Naive thymus-derived CD4-positive, alpha-beta T cell (primary cell): ENCODE measurements at regions of chr1 and their contacts with region 1.

Region 1: GRCh38 chr1:24391882-24392603 is 21.5 kb downstream of the STPG1 start:
- DNase-seq: peak in 8 of 9 donors; percentile 29 to 60 (median 47)
- ATAC-seq: peak; percentile 81
- H3K4me3 ChIP-seq: peak overlapping the region; percentile 35
- H3K4me3 Mint-ChIP-seq: peak overlapping the region in 9 of 10 donors; percentile 18 to 77 (median 66)
- H3K27ac ChIP-seq: peak overlapping the region; percentile 60
- H3K27ac Mint-ChIP-seq: peak overlapping the region; percentile 76 to 97 (median 94)
- H3K4me1 ChIP-seq: peaks cover 12 to 29% of the 10 kb centered on the region in 2 donors
- H3K4me1 Mint-ChIP-seq: peaks cover 26 to 45% (median 40%) of the 10 kb centered on the region in 7 donors
- H3K27me3 ChIP-seq: no peaks in the 10 kb centered on the region
- H3K27me3 Mint-ChIP-seq: no peaks in the 10 kb centered on the region

Region 2: GRCh38 chr1:24070821-24071393 is 321.1 kb before region 1 on chr1:
- CTCF ChIA-PET with region 1: no interaction called
- POLR2A ChIA-PET with region 1: no interaction called
- intact Hi-C with region 1: loop called (anchors 2 to 10 kb)
- DNase-seq: peak; percentile 36 to 73 (median 66)
- ATAC-seq: peak; percentile 92
- H3K4me3 ChIP-seq: no peak overlapping the region
- H3K4me3 Mint-ChIP-seq: peak overlapping the region in 1 of 10 donors; percentile 6
- H3K27ac ChIP-seq: no peak overlapping the region
- H3K27ac Mint-ChIP-seq: no peak overlapping the region
- H3K4me1 ChIP-seq: no peaks in the 10 kb centered on the region
- H3K4me1 Mint-ChIP-seq: peaks cover 0 to 5% (median 4%) of the 10 kb centered on the region in 7 donors
- H3K27me3 ChIP-seq: no peaks in the 10 kb centered on the region
- H3K27me3 Mint-ChIP-seq: peaks cover 0 to 10% (median 4%) of the 10 kb centered on the region in 5 donors

Region 3: DNA sequence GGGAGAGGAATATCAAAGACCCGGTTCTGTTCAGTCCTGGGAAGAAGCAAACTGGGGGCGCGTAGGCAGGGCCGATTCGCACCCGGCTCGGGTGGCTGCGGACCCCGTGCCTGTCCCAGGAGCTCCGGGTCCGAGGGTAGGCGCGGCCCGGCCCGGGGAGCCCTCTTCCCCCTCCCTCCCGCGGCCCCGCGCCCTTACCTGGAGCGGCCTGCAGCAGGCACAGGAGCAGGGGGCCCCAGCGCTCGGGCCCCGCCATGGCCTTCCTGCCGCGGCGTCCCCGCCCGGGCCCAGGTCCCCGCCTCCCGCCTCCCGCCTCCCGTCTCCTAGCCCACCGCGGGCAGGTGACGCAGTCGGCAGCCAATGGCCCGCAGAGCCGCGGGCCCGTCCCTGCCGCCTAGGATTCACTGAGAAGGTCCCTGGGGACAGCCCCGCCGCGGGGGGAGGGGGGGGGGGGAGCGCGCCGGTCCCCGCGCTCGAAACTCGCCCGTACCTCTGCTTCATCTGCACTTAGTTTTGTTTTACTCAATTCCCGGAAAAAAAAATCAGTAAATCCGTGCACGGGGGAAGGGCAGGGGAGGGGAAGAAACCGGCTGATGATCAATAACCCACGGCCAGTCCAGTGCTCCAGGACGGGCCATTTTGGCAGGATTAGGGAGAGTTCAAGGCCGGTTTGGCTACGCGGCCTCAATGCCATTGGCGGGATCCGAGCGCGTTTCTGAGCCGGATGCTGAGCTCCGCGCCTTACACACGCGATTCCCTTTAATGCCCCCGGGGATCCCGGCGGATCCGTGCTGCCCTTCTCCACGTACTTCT is 204.8 kb before region 1 on chr1 and contains the start of gene IFNLR1:
- CTCF ChIA-PET with region 1: interaction called, 14 read pairs
- POLR2A ChIA-PET with region 1: no interaction called
- intact Hi-C with region 1: no loop called
- DNase-seq: peak; percentile 12 to 83 (median 28)
- ATAC-seq: peak; percentile 78
- H3K4me3 ChIP-seq: peak within 1 kb of the TSS; percentile 73
- H3K4me3 Mint-ChIP-seq: peak within 1 kb of the TSS; percentile 79 to 91 (median 85)
- H3K27ac ChIP-seq: peak within 1 kb of the TSS; percentile 65
- H3K27ac Mint-ChIP-seq: peak within 1 kb of the TSS; percentile 34 to 74 (median 63)
- H3K4me1 ChIP-seq: peaks cover 16 to 27% of the 10 kb centered on the region in 2 donors
- H3K4me1 Mint-ChIP-seq: peaks cover 16 to 40% (median 32%) of the 10 kb centered on the region in 7 donors
- H3K27me3 ChIP-seq: no peaks in the 10 kb centered on the region
- H3K27me3 Mint-ChIP-seq: peaks cover 0 to 13% (median 0%) of the 10 kb centered on the region in 5 donors
- total RNA-seq, gene IFNLR1: 1.0 to 3.9 (median 2.6) TPM

Region 4: DNA sequence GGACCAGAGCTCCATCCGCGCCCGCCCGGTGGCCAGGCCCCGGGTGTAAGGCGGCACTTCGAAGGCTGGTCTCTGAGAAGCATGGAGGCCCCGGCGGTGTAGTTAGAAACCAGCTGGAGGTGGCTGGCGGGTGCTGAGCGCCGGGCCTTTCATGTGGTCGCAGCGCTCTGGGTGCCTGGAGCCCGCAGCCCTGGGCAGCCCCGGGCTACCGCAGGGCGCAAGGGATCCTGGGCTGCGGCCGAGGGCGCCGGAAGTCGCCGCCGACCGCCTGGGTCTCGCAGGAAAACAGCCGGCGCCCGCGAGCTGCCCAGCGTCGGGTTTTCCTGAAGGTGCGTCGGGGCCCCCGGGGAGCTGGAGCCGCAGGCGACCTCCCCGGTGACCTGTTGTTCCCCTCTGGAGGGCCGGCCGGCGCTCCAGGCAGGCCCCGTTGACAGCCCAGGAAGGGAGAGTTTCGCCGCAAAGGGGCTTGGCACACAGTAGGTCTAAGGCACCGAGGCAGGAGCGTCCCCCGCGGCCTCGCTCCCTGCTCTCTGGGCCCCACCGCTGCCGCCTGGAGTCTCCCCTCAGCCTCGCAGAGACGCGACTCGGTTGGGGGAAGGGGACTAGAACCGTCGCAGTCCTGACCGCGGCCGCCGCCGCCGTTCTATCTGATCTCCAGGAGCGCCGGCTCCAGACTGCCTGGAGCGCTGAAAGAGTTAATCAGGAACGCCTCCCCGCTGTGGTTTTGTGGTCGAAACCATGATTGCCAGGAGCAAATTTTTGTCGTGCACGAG is 70.2 kb before region 1 on chr1:
- CTCF ChIA-PET with region 1: interaction called, 4 read pairs
- POLR2A ChIA-PET with region 1: no interaction called
- intact Hi-C with region 1: loop called in 1 of 2 experiments (anchors 1 kb)
- DNase-seq: peak; percentile 34 to 77 (median 65)
- ATAC-seq: peak; percentile 80
- H3K4me3 ChIP-seq: peak overlapping the region; percentile 42
- H3K4me3 Mint-ChIP-seq: peak overlapping the region; percentile 86 to 95 (median 90)
- H3K27ac ChIP-seq: no peak overlapping the region
- H3K27ac Mint-ChIP-seq: peak overlapping the region in 6 of 9 donors; percentile 9 to 81 (median 71)
- H3K4me1 ChIP-seq: peaks cover 22 to 43% of the 10 kb centered on the region in 2 donors
- H3K4me1 Mint-ChIP-seq: peaks cover 36 to 54% (median 47%) of the 10 kb centered on the region in 7 donors
- H3K27me3 ChIP-seq: peaks cover 0 to 11% of the 10 kb centered on the region in 2 donors
- H3K27me3 Mint-ChIP-seq: peaks cover 0 to 96% (median 44%) of the 10 kb centered on the region in 5 donors

Region 5: DNA sequence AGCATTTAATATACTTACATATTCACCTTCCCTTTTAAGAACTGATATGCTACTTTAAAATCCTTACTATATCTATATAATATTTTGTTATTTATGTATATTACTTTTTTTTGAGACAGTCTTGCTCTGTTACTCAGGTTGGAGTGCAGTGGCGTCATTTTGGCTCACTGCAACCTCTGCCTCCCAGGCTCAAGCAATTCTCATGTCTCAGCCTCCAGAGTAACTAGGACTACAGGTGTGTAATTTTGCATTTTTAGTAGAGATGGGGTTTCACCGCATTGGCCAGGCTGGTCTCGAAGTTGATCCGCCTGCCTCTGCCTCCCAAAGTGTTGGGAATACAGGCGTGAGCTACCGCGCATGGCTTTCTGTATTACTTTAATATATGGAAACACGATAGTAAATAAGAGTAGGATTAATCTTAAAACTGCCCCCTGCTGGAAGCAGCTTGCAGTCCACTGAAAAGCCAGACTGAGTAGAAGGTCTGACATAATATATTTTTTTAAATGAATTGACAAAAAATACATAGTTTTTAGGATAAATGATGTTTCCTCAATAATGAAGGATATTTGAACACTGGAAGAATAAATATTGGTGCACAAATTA is 135.0 kb after region 1 on chr1:
- CTCF ChIA-PET with region 1: interaction called, 13 read pairs
- POLR2A ChIA-PET with region 1: no interaction called
- intact Hi-C with region 1: no loop called
- DNase-seq: peak in 8 of 9 donors; percentile 28 to 66 (median 56)
- ATAC-seq: peak; percentile 69
- H3K4me3 ChIP-seq: no peak overlapping the region
- H3K4me3 Mint-ChIP-seq: peak overlapping the region in 7 of 10 donors; percentile 23 to 57 (median 39)
- H3K27ac ChIP-seq: peak overlapping the region; percentile 40
- H3K27ac Mint-ChIP-seq: peak overlapping the region in 8 of 9 donors; percentile 32 to 93 (median 84)
- H3K4me1 ChIP-seq: peaks cover 0 to 49% of the 10 kb centered on the region in 2 donors
- H3K4me1 Mint-ChIP-seq: peaks cover 31 to 86% (median 71%) of the 10 kb centered on the region in 7 donors
- H3K27me3 ChIP-seq: no peaks in the 10 kb centered on the region
- H3K27me3 Mint-ChIP-seq: no peaks in the 10 kb centered on the region

Region 6: DNA sequence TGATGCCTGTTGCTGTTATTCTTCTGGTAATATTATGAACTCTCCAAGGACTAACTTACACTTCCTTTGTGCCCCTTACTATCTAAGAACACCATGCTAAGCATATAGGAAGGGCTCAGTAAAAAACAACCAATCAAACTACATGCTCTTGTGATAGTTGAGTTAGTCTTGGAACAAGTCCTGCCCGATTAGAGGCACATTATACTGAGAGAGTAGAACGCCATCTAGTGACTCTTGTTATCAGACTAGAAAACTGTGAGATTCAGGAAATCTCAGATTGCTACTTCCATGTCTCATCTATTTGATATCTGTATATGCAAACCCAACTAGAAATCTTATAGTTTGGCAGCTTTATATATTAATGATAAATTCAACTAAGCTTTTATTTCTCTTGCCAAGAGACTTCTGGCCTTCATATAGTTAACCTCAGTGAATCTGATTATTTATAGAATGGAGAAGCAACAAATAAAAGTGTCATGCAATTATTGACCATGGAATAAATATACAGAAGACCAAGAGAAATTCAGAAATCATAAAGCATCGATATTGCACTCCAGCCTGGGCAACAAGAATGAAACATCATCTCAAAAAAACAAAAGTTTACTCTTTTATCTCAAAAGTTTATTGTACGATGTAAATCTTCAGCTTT is 243.3 kb after region 1 on chr1:
- CTCF ChIA-PET with region 1: interaction called, 8 read pairs
- POLR2A ChIA-PET with region 1: no interaction called
- intact Hi-C with region 1: loop called (anchors 1 to 2 kb)
- DNase-seq: peak in 7 of 9 donors; percentile 39 to 69 (median 62)
- ATAC-seq: peak; percentile 85
- H3K4me3 ChIP-seq: no peak overlapping the region
- H3K4me3 Mint-ChIP-seq: no peak overlapping the region
- H3K27ac ChIP-seq: no peak overlapping the region
- H3K27ac Mint-ChIP-seq: peak overlapping the region in 5 of 9 donors; percentile 0 to 77 (median 64)
- H3K4me1 ChIP-seq: no peaks in the 10 kb centered on the region
- H3K4me1 Mint-ChIP-seq: peaks cover 2 to 14% (median 8%) of the 10 kb centered on the region in 7 donors
- H3K27me3 ChIP-seq: no peaks in the 10 kb centered on the region
- H3K27me3 Mint-ChIP-seq: peaks cover 4 to 21% (median 8%) of the 10 kb centered on the region in 5 donors